ENCODE measurements at regions of chr6 and their contacts with region 1.

Region 1: DNA sequence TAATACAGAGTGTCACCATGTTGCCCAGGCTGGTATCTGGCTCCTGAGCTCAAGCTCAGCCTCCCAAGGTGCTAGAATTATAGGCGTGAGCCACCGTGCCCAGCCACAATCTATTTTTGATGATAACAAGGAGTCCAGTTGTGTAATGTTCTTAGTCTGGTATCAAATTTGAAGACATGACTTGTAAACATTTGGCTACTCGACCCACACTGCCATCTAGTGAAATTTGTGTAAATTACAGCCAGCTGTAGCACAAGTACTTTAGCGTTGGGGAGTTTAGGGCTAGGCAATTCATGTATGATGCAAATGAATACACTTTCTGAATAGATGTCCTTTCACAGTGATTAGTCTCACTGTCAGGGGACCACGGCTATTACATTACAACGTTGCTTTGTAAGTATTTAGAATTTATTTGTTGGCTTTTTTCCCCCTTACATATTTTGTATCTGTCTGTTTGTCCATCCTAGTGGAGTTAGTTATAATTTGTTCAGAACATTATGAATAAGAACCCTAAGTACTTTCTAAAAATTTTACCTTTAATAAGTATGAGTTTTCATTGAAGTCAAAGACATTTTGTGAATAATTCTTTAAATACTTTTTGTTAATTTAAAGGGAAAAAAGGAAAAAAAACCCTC is 139.7 kb downstream of the PRDM13 start:
- DNase-seq: no peak
- ATAC-seq: peak; percentile 88
- H3K4me3 ChIP-seq: no peak overlapping the region
- H3K27ac ChIP-seq: no peak overlapping the region
- H3K4me1 ChIP-seq: no peaks in the 10 kb centered on the region
- H3K27me3 ChIP-seq: no peaks in the 10 kb centered on the region

Region 2: DNA sequence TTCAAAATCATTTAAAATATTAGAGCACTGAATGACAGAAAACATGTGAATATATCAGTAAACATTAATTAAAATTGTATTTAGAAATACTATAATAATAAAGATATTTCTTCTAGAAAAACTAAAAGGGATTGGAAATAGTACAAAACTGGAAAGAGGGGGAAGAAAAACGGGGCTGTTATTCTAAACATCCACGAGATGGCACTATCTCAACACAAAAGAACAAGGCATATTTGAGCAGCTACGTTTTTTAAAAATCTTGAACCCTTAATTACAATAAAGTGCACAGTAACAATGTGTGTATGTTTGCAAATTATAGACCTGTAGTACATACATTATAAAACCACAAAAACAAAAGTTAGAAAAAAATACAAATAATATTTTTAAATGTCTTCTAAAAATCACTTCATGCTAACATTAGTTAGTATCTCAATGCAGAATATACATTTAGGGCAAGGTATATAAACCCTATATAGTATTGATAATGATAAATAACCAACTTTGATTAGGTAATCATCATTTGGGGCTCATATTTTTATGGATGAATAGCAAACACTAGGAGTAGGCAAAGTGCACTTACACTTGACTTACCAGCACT is 278.8 kb before region 1 on chr6:
- intact Hi-C with region 1: loop called (anchors 5 kb)
- DNase-seq: no peak
- ATAC-seq: no peak
- H3K4me3 ChIP-seq: no peak overlapping the region
- H3K27ac ChIP-seq: no peak overlapping the region
- H3K4me1 ChIP-seq: no peaks in the 10 kb centered on the region
- H3K27me3 ChIP-seq: no peaks in the 10 kb centered on the region

Region 3: GRCh38 chr6:99603421-99604165 is 142.8 kb before region 1 on chr6:
- intact Hi-C with region 1: loop called in 1 of 2 experiments (anchors 5 kb)
- DNase-seq: peak in 1 of 2 donors; percentile 80
- ATAC-seq: no peak
- H3K4me3 ChIP-seq: no peak overlapping the region
- H3K27ac ChIP-seq: no peak overlapping the region
- H3K4me1 ChIP-seq: no peaks in the 10 kb centered on the region
- H3K27me3 ChIP-seq: no peaks in the 10 kb centered on the region